Heart left ventricle (tissue), 16 donors: ENCODE measurements at regions of chr18 and their contacts with region 1.

Region 1: DNA sequence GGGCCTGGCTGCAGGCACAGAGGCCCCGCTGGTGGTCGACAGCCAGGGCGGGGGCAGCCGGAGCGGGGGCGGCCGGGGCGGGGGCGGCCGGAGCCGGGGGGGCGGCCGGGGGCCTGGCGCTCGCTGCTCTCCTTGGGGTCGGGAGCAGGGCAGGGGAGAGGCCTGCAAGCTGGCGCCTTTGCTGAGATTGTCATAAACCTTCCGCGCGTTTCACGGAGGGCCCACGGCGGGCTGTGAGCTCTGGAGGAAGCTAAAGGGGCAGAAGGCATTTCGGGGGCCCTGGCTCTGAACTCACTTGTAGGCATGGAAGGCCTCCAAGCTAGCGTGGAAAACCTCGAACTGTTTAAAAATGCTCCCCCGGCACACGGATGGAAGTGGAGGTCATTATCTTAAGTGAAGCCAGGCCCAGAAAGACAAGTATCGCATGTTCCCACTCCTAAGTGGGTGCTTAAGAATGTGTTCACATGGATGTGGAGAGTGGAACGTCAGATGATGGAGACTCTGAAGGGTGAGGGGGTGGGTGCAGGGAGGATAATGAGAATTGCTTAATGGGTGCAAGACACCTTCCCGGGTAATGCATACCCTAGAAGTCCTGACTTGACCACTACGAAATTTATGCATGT is 629 bp downstream of the PRELID3A start:
- DNase-seq: peak in 2 of 5 donors; percentile 29 to 64
- ATAC-seq: no peak
- H3K4me3 ChIP-seq: peak overlapping the region; percentile 31 to 84 (median 64)
- H3K27ac ChIP-seq: peak overlapping the region in 11 of 12 donors; percentile 74 to 90 (median 85)
- H3K4me1 ChIP-seq: peaks cover 0 to 26% (median 8%) of the 10 kb centered on the region in 12 donors
- H3K27me3 ChIP-seq: peaks cover 0 to 12% (median 0%) of the 10 kb centered on the region in 9 donors
- CTCF ChIP-seq: no peak
- POLR2A ChIP-seq: no peak

Region 2: GRCh38 chr18:12455496-12455895 is 47.1 kb after region 1 on chr18:
- intact Hi-C with region 1: loop called in 1 of 10 experiments (anchors 10 kb)
- DNase-seq: no peak
- ATAC-seq: peak in 1 of 4 donors; percentile 7
- H3K4me3 ChIP-seq: no peak overlapping the region
- H3K27ac ChIP-seq: no peak overlapping the region
- H3K4me1 ChIP-seq: peaks cover 0 to under 1% (median 0%) of the 10 kb centered on the region in 12 donors
- H3K27me3 ChIP-seq: no peaks in the 10 kb centered on the region
- CTCF ChIP-seq: no peak
- POLR2A ChIP-seq: no peak

Region 3: GRCh38 chr18:12485479-12486105 is 77.2 kb after region 1 on chr18:
- intact Hi-C with region 1: loop called in 1 of 10 experiments (anchors 10 kb)
- DNase-seq: no peak
- ATAC-seq: no peak
- H3K4me3 ChIP-seq: no peak overlapping the region
- H3K27ac ChIP-seq: no peak overlapping the region
- H3K4me1 ChIP-seq: peaks cover 0 to 4% (median 0%) of the 10 kb centered on the region in 12 donors
- H3K27me3 ChIP-seq: no peaks in the 10 kb centered on the region
- CTCF ChIP-seq: no peak
- POLR2A ChIP-seq: no peak

Region 4: GRCh38 chr18:12520442-12520992 is 112.2 kb after region 1 on chr18:
- intact Hi-C with region 1: loop called in 1 of 10 experiments (anchors 10 kb)
- DNase-seq: no peak
- ATAC-seq: peak in 1 of 4 donors; percentile 34
- H3K4me3 ChIP-seq: no peak overlapping the region
- H3K27ac ChIP-seq: no peak overlapping the region
- H3K4me1 ChIP-seq: peaks cover 0 to 30% (median 16%) of the 10 kb centered on the region in 12 donors
- H3K27me3 ChIP-seq: no peaks in the 10 kb centered on the region
- CTCF ChIP-seq: no peak
- POLR2A ChIP-seq: no peak